Left colon (tissue), 2 donors: ENCODE measurements at regions of chr2 and their contacts with region 1.

Region 1: DNA sequence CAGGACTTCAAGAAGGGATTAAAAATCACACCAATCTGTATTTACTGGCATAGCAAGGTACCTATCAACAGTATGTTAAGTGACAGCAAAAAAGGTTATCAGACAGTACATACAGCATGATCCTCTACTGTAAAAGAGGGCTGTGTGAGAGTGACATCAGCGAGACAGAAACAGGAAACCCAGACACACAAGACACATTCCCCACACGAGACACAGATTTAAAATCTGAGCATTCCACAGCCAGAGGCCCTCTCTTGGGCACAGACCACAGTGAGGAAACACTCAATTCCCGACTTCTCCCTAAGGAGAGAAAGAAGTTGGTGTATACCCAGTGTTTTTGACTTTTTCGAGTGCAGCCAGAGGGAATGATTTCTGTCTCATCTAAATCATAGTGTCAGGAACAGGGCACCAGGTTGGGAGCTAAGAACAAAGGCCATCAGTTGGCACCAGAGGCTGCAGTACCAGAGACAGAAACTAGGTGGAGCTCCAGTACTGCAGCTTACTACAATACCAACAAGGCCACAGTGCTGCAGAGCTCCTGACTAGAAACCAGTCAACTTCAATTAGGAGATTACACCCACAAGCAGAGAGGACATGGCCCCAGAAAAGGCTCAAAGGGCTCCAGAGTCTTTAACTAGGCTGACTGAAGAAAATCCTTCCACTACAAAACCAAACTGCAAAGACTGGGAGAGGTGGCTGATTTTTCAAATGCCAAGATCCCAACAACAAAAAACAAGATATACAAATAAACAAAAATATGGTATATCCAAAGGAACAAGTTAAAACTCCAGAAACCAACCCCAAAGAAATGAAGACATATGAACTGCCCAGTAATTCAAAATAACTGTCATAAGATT is 41.0 kb downstream of the UNC50 start:
- DNase-seq: peak; percentile 70 to 85
- ATAC-seq: peak; percentile 89

Region 2: GRCh38 chr2:98548920-98549818 is 100.2 kb before region 1 on chr2:
- intact Hi-C with region 1: no loop called
- DNase-seq: no peak
- ATAC-seq: no peak

Region 3: DNA sequence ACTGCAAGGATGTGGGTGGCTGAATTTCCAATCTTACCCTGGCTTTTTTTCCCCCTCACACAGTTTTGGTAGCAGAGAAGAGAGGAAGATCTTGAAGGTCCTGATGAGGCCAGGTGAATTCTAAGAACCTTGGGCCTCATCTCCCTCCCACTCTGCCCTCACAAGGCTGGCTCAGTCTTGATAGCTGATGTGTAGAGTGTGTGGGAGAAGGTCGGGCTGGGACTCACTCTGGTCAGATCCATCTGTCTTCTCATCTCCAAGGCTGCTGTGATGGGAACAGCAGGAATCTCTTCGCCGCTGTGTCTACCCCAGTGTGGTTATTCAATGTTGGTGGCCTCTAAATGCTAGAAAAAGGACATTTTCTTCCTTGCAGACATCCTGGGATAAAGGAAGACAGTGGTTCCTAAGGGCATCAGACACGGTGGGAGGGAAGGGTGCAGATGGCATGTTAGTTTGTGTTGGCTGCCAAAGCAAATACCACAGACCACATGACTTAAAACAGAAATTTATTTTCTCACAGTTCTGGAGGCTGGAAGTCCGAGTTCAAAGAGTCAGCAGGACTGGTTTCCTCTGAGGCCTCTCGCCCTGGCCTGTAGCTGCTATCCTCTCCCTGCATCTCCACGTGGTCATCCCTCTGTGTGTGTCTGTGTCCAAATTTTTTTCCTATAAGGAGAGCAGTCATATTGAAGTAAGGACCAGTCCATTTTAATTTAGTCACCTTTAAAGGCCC is 119.2 kb after region 1 on chr2:
- intact Hi-C with region 1: no loop called
- DNase-seq: no peak
- ATAC-seq: peak; percentile 25

Region 4: GRCh38 chr2:98835831-98836385 is 186.5 kb after region 1 on chr2:
- intact Hi-C with region 1: loop called in 1 of 2 experiments (anchors 2 kb)
- DNase-seq: no peak
- ATAC-seq: no peak

Region 5: GRCh38 chr2:99066075-99066958 is 417.0 kb after region 1 on chr2:
- intact Hi-C with region 1: loop called in 1 of 2 experiments (anchors 5 kb)
- DNase-seq: peak; percentile 44 to 50
- ATAC-seq: peak; percentile 97